Activated CD4-positive, alpha-beta T cell treated with anti-CD3 and anti-CD28 coated beads for 36 hours (primary cell): ENCODE measurements at regions of chr11 and their contacts with region 1.

Region 1: DNA sequence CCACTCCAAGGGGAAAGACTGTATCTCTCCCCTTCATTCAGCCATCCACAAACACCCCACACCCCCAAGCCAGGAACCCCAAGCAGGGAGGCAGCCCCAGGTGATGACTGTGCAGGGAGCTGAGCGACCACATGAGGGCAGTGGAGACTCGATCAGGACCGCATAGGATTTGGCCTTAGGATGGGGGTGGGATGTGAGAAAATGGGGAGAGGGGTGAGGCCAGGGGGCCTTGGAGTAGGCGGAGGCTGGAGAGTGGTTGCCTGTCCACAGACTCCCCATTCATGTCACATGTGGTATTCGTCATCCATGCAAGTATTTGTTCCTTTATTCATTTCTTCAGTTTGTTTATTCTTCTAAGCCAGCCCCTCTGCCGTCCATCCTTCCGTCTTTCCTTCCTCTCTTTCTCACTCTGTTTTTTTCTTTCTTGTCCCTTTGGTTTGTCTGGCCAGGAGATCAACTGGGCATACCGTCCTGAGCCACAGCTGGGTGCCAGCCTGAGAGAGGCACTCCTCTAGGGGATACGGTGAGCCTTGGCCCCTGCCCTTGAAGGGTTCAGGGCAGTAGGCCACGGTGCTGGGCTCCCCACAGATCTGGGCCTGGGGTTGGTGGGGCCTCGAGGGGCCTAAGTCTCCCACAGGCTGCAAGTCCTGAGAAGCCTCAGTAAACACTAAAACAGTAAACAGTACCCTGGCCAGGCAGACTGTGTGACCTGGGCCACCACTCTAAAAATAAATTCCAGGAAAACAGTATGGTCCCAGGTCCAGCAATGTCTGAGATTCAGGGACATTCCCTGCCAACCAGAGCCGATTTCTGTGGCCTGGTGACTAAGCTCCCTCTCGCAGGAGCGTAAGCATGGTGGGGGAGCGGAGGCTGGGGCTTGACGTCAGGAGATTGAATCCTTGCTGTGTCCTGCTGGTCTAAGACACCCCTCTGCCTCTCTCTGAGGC is 2.5 kb upstream of the RHOD start:
- DNase-seq: peak; percentile 76
- ATAC-seq: peak; percentile 75
- H3K4me3 Mint-ChIP-seq: no peak overlapping the region
- H3K27ac Mint-ChIP-seq: no peak overlapping the region
- H3K4me1 Mint-ChIP-seq: peaks cover 17% of the 10 kb centered on the region
- H3K27me3 Mint-ChIP-seq: peaks cover 6% of the 10 kb centered on the region

Region 2: DNA sequence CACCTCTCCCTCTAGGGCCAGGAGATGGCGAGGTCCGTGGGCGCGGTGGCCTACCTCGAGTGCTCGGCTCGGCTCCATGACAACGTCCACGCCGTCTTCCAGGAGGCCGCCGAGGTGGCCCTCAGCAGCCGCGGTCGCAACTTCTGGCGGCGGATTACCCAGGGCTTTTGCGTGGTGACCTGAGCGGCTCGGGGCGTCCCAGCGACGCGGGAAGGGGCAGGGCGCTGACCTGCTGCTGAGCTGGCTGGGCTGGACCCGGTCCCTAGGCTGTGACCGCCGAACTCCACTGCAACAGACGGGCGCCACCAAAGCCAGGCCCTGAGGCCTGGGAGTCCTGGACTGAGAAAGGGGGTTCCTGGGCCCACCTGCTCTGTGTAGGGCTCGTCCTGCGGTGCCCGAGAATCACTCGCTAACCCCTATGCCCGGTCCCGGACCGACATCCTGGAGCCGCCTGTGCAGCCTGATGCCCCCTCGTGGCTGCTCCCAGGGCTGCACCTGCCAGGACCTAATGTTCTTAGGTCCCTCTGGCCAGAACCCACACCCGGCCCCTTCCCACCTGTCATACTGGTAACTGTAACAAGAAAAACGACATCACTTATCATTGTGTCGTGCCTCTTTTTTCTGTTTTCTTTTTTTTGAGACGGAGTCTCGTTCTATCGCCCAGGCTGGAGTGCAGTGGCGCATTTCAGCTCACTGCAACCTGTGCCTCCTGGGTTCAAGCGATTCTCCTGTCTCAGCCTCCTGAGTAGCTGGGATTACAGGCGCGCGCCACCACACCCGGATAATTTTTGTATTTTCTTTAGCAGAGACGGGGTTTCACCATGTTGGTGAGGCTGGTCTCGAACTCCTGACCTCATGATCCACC is 17.5 kb after region 1 on chr11:
- CTCF ChIA-PET with region 1: interaction called, 36 read pairs
- POLR2A ChIA-PET with region 1: no interaction called
- intact Hi-C with region 1: loop called (anchors 1 to 2 kb)
- DNase-seq: peak; percentile 90
- ATAC-seq: peak; percentile 96
- H3K4me3 Mint-ChIP-seq: no peak overlapping the region
- H3K27ac Mint-ChIP-seq: no peak overlapping the region
- H3K4me1 Mint-ChIP-seq: peaks cover 3% of the 10 kb centered on the region
- H3K27me3 Mint-ChIP-seq: no peaks in the 10 kb centered on the region